Activated CD4-positive, alpha-beta T cell treated with anti-CD3 and anti-CD28 coated beads, Interleukin-2, amount 10 ng/mL, durations not matched to agents 24 days and 14 days (primary cell): ENCODE measurements at regions of chr2 and their contacts with region 1.

Region 1: DNA sequence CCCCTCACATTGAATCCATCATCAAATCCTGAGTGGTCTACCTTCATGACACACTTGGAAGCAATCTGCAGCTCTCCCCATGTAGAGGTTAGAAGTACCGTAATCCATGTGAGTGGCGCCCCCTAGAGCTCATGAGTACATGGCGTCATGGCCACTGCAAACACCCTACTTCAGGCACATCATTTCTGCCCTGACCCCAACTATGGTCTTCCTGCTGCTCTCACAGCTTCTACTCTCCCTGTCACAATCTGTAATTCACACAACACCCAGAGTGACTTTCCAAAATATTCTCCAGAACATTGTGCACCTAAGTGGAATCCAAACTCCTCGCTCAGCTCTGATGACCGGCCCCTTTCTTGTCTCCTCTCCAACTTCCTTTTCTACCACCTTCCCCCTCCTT is 141.9 kb downstream of the ANKRD44 start:
- DNase-seq: peak; percentile 88
- H3K4me3 Mint-ChIP-seq: no peak overlapping the region
- H3K27ac Mint-ChIP-seq: peak overlapping the region; percentile 46
- H3K4me1 Mint-ChIP-seq: peaks cover 32% of the 10 kb centered on the region
- H3K27me3 Mint-ChIP-seq: no peaks in the 10 kb centered on the region

Region 2: DNA sequence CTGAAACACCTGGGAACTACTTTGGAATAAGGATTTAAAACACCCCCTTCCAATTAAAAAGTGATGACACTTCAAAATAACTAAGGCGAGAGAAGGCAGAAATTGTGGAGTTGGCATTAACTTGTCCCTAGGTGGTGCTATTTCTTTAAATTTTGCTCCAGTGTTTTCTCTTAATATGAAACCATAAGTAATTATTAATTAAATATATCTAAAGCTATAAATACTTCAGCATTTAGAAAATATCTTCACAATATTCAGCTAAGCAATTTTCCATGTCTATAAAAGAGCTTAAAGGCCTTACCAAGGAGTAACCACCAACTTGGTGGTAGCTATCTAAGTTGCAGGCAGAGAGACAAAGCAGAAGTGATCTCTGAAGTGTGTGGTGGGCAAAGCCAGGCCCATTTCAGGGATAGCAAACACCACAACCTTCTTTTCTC is 55.4 kb before region 1 on chr2:
- intact Hi-C with region 1: loop called (anchors 1 kb)
- DNase-seq: no peak
- H3K4me3 Mint-ChIP-seq: no peak overlapping the region
- H3K27ac Mint-ChIP-seq: no peak overlapping the region
- H3K4me1 Mint-ChIP-seq: peaks cover 18% of the 10 kb centered on the region
- H3K27me3 Mint-ChIP-seq: no peaks in the 10 kb centered on the region

Region 3: GRCh38 chr2:197130318-197130717 is 38.4 kb before region 1 on chr2:
- intact Hi-C with region 1: loop called (anchors 5 kb)
- DNase-seq: peak; percentile 77
- H3K4me3 Mint-ChIP-seq: peak overlapping the region; percentile 19
- H3K27ac Mint-ChIP-seq: peak overlapping the region; percentile 83
- H3K4me1 Mint-ChIP-seq: peaks cover 63% of the 10 kb centered on the region
- H3K27me3 Mint-ChIP-seq: no peaks in the 10 kb centered on the region

Region 4: GRCh38 chr2:197152451-197153228 is 16.1 kb before region 1 on chr2:
- intact Hi-C with region 1: loop called (anchors 2 kb)
- DNase-seq: peak; percentile 69
- H3K4me3 Mint-ChIP-seq: peak overlapping the region; percentile 50
- H3K27ac Mint-ChIP-seq: peak overlapping the region; percentile 72
- H3K4me1 Mint-ChIP-seq: peaks cover 56% of the 10 kb centered on the region
- H3K27me3 Mint-ChIP-seq: no peaks in the 10 kb centered on the region